ENCODE measurements at regions of chr1 and their contacts with region 1.

Region 1: GRCh38 chr1:98849969-98850636 is 154.6 kb downstream of the PLPPR5 start:
- DNase-seq: no peak

Region 2: DNA sequence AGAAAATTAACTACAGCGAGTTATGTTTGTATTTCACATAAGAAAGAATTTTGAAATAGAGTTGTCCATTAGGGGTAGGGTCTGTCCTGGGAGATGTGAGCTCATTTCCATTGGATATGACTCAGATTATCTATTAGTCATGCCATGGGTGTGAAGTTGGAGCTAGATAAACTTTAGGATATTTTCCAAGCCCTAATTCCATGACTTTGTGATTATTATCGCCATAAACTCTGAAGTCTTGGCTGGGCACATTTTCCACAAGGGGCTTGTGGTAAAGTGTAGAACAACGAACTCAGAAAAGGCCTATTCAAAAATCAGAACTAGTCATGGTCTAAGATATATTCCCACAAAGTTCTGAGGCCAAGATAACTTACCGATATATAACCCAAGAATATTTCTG is 1325.9 kb before region 1 on chr1:
- intact Hi-C with region 1: no loop called
- DNase-seq: no peak

Region 3: DNA sequence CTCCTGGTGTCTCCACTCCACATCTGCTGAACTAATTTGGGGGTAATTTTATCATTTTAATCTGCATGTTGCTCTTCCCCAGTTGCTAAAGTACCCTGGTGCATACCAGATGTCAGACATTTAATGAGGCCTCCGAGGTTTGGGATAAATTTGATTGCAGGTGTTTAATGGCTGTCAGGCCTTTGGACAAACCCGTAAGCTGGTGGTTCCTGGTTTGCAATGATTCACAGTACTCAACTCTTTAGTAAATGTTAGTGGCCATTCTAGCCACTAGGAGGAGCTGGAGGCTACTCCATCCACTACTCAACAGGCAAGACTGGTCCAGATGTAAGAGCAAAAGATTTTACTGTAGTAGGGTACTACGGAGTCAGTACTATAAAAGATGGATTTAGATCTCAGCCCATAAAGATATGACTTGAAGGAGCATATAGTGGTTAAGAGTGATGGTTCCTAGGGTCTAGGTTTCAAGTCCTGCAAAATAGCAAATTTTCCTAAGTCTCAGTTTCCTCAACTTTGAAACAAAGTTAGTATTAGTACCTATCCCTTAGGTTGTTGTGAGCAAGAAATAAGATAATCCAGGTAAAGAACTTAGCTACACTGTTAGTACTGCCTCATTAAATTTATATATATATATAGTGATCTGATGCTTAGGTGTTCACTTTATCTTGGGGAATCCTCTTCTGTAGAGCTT is 55.8 kb before region 1 on chr1:
- intact Hi-C with region 1: loop called (anchors 10 kb)
- DNase-seq: peak in 26 of 42 donors; percentile 5 to 68 (median 34)

Measured in head of caudate nucleus (tissue), 42 donors.